Esophagus muscularis mucosa (tissue), 4 donors: ENCODE measurements at regions of chr6 and their contacts with region 1.

Region 1: GRCh38 chr6:161694995-161695394 is 421.1 kb upstream of the AGPAT4 start:
- DNase-seq: no peak
- H3K4me3 ChIP-seq: no peak overlapping the region
- H3K27ac ChIP-seq: no peak overlapping the region
- H3K4me1 ChIP-seq: no peaks in the 10 kb centered on the region
- H3K27me3 ChIP-seq: no peaks in the 10 kb centered on the region
- CTCF ChIP-seq: peak; percentile 36 to 53 (median 37)
- EP300 ChIP-seq: no peak
- POLR2A ChIP-seq: no peak

Region 2: GRCh38 chr6:161395716-161396231 is 299.2 kb before region 1 on chr6:
- intact Hi-C with region 1: loop called (anchors 5 kb)
- DNase-seq: no peak
- H3K4me3 ChIP-seq: no peak overlapping the region
- H3K27ac ChIP-seq: no peak overlapping the region
- H3K4me1 ChIP-seq: peaks cover 0 to 6% (median 2%) of the 10 kb centered on the region in 4 donors
- H3K27me3 ChIP-seq: no peaks in the 10 kb centered on the region
- CTCF ChIP-seq: no peak
- EP300 ChIP-seq: no peak
- POLR2A ChIP-seq: no peak